ENCODE measurements at regions of chr2 and their contacts with region 1.

Region 1: DNA sequence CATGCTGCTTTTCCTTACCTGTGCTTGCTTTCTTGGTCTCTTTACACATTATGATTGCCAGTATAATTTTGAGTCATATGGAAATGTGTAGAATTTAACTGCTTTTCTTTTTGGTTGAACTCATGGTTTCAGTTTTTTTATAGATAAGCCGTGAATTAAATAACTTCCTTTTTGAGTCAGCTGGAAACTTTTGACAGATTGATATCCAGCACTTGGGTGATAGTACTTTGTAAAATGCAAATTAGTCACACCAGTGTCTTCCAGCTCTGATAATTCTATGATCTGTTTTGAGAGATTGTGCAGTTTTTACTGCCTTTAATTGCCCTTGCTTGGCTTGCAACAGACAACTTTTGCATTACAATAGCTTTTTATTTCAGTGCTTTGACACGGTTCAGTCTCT is 86.4 kb downstream of the NCOA1 start:
- DNase-seq: no peak
- H3K4me3 Mint-ChIP-seq: peak overlapping the region; percentile 25
- H3K27ac Mint-ChIP-seq: peak overlapping the region; percentile 81
- H3K4me1 Mint-ChIP-seq: peaks cover 66% of the 10 kb centered on the region
- H3K27me3 Mint-ChIP-seq: no peaks in the 10 kb centered on the region

Region 2: DNA sequence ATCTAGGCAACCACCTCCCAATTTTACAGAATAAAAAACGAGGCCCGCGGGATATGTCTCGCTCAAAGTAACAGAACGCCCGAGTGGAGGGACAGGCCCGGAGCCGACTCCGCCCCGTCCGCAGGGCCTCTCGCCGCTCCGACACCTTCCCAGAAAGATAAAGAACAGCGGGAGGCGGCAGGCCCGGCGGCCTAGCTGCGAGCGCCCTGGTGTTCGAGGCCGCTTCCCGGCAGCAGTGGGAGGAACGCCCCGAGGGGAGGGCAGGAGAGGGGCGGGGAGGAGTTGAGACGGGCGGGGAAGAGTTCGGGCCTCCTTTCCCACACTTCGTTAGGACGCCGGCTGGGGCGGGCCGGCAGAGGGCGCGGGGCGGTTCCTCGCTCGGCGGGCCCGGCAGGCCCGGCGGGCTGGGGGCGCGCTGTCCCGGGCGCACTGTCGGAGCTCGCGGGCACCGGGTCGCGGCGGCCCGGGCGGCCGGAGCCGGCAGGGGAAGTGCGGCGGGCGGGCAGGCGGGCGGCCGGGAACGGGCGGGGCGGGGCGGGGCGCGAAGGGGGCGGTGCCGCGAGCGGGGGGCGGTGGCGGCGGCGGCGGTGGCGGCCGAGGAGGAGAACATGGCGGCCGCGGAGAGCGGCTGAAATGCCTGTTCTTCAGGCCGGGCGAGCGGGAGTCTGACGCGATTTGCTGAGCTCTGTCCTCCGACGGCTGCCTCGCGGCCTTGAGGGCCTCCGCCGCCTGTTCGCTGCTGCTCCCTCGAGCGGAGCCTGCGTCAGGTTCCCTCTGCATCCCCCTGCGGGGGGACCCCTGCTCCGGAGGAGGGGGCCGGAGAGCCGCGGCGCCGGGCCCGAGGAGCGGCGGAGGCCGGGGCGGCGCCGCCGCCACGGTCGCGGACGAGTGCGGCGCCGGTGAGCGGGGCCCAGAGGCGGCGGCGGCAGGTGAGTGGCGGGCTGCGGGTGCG is 86.5 kb before region 1 on chr2 and contains the start of gene NCOA1:
- CTCF ChIA-PET with region 1: interaction called, 3 read pairs
- POLR2A ChIA-PET with region 1: interaction called, 10 read pairs
- intact Hi-C with region 1: loop called (anchors 1 kb)
- DNase-seq: peak; percentile 95
- H3K4me3 Mint-ChIP-seq: peak within 1 kb of the TSS; percentile 83
- H3K27ac Mint-ChIP-seq: peak within 1 kb of the TSS; percentile 91
- H3K4me1 Mint-ChIP-seq: peaks cover 48% of the 10 kb centered on the region
- H3K27me3 Mint-ChIP-seq: no peaks in the 10 kb centered on the region
- total RNA-seq, gene NCOA1: 21.3 to 24.0 TPM

Region 3: DNA sequence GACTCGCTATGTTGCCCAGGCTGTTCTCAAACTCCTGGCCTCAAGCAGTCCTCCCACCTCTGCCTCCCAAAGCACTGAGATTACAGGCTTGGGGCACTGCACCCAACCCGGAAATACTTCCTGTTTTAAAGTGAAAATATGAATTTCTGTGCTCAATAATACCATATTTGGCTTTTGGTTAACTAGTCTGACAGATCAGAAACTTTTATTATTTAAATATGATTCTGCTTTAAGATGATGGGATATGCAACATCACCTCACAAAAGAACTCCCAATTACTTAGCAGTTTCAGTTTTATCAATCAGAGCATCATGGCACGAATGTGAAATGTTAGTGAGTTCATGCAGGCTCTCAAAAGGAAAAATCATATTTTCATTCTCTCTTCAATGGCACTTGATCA is 95.1 kb after region 1 on chr2:
- CTCF ChIA-PET with region 1: interaction called, 3 read pairs
- POLR2A ChIA-PET with region 1: no interaction called
- intact Hi-C with region 1: loop called (anchors 2 kb)
- DNase-seq: peak; percentile 38
- H3K4me3 Mint-ChIP-seq: no peak overlapping the region
- H3K27ac Mint-ChIP-seq: peak overlapping the region; percentile 33
- H3K4me1 Mint-ChIP-seq: peaks cover 13% of the 10 kb centered on the region
- H3K27me3 Mint-ChIP-seq: no peaks in the 10 kb centered on the region

Region 4: DNA sequence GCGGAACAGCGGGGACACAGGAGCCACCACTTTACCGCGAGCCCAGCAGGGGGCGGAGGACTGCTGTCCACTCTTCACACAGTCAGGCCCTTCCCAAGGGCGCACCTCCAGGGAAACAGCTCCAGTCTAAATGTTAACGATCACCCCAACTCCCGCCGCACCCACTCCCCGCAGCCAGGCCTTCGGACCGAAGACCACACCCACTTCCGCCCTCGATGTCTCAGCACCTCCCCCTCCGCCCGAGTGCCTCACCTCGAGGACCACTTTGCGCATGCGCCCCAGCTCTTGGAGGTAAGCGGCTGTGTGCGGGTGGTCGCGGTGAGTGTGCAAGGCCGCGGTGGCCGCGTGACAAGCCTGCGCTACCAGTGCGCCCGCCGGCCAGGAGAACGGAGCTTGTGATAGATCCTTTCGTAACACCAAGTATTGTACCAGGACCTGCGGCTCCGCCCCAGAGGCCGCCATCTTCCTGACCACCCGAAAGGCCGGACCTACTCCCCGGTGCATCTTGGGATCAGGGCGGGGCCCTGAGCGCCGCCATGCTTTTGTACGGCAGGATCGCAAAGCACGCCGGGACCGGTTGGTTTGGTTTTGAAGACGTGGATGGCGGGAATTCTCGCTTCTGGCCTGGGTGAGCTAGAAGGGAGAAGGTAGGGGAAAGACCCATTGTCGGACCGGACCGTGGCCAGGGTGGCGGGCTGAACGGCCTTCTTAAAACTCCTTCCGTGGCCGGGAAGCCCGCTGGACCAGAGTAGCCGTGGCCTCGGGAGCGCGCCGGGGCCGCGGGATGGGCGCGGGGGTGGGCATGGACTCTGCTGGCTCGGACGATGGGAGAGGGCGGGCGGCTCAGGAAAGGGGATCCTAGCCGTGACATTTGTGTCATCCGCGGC is 215.6 kb after region 1 on chr2 and contains the starts of genes CENPO and PTRHD1:
- CTCF ChIA-PET with region 1: interaction called, 4 read pairs
- POLR2A ChIA-PET with region 1: interaction called, 4 read pairs
- intact Hi-C with region 1: loop called (anchors 2 kb)
- DNase-seq: peak; percentile 97
- H3K4me3 Mint-ChIP-seq: peak within 1 kb of the TSS; percentile 98
- H3K27ac Mint-ChIP-seq: peak within 1 kb of the TSS; percentile 100
- H3K4me1 Mint-ChIP-seq: peaks cover 35% of the 10 kb centered on the region
- H3K27me3 Mint-ChIP-seq: no peaks in the 10 kb centered on the region
- total RNA-seq, gene CENPO: 39.9 to 42.4 TPM
- total RNA-seq, gene PTRHD1: 19.2 to 20.3 TPM

Region 5: DNA sequence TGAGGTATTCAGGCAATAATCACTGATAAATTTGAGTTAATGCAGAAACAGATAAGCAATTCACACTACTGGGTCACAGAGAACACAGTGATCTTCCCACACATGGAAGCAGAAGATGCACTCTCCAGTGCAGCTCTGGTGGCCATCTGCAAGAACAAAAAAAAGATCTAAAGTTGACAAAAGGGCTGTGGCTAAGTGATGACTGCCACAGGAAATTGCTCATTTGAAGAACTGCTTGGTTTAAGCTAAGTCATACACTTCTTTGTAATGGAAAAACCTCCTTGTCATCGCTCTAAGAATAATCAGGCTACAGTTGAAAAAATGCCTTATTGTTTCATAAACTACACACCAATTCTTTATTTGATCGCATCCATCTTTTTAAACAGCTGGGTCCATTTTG is 980.8 kb after region 1 on chr2:
- CTCF ChIA-PET with region 1: no interaction called
- POLR2A ChIA-PET with region 1: no interaction called
- intact Hi-C with region 1: loop called (anchors 2 kb)
- DNase-seq: peak; percentile 63
- H3K4me3 Mint-ChIP-seq: no peak overlapping the region
- H3K27ac Mint-ChIP-seq: peak overlapping the region; percentile 80
- H3K4me1 Mint-ChIP-seq: peaks cover 57% of the 10 kb centered on the region
- H3K27me3 Mint-ChIP-seq: no peaks in the 10 kb centered on the region